Esophagus squamous epithelium (tissue), 5 donors: ENCODE measurements at regions of chr15 and their contacts with region 1.

Region 1: GRCh38 chr15:27017168-27017809 is 46.3 kb downstream of the GABRG3 start:
- DNase-seq: no peak
- H3K4me3 ChIP-seq: no peak overlapping the region
- H3K27ac ChIP-seq: no peak overlapping the region
- H3K4me1 ChIP-seq: no peaks in the 10 kb centered on the region
- H3K27me3 ChIP-seq: no peaks in the 10 kb centered on the region
- CTCF ChIP-seq: peak in 5 of 6 experiments; percentile 56 to 77 (median 56)
- POLR2A ChIP-seq: no peak

Region 2: DNA sequence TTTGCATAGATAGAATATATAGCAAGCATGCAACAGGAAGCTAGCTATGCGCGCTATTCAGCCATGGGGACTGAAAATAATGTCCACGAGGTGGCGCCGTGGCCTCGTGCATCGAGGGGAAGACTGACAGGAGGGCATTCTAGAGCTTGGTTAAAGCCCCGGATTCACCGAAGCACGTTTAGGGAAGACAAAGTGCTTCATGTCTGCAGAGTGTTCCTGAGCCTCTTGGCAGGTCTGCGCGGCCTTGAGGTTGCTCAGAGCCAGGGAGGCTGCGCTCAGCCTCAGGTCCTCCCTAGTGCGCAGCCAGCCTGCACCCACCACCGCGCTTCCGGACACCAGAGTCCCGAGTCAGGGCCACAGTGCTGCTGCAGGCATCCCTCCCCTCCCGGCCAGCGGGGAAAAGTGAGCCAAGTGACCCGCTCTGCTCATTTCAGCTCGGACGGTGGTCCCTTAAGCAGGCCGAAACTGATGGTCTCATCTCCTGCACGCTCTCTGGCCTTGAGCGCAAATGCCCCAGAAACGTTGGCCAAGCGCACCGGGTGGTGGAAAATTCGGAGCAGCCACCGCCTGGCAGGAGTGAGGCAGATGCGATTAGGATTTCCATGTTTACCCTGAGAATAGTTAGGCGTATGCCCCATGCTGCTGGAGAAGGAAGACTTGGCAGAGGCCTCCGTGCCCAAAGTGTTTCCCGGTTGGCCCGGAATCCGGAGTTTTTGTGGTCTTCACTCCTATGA is 125.7 kb before region 1 on chr15:
- intact Hi-C with region 1: loop called (anchors 5 kb)
- DNase-seq: no peak
- H3K4me3 ChIP-seq: peak overlapping the region; percentile 10 to 46 (median 26)
- H3K27ac ChIP-seq: no peak overlapping the region
- H3K4me1 ChIP-seq: peaks cover 3 to 28% (median 7%) of the 10 kb centered on the region in 3 donors
- H3K27me3 ChIP-seq: peaks cover 0 to 31% (median 0%) of the 10 kb centered on the region in 4 donors
- CTCF ChIP-seq: peak; percentile 24 to 78 (median 53)
- POLR2A ChIP-seq: no peak

Region 3: GRCh38 chr15:27091270-27091940 is 74.1 kb after region 1 on chr15:
- intact Hi-C with region 1: no loop called
- DNase-seq: no peak
- H3K4me3 ChIP-seq: no peak overlapping the region
- H3K27ac ChIP-seq: no peak overlapping the region
- H3K4me1 ChIP-seq: no peaks in the 10 kb centered on the region
- H3K27me3 ChIP-seq: no peaks in the 10 kb centered on the region
- CTCF ChIP-seq: no peak
- POLR2A ChIP-seq: no peak